Heart left ventricle (tissue), 16 donors: ENCODE measurements at regions of chr7 and their contacts with region 1.

Region 1: GRCh38 chr7:112665726-112666125 is 124.5 kb downstream of the TMEM168 start:
- DNase-seq: no peak
- ATAC-seq: peak in 3 of 4 donors; percentile 52 to 73 (median 59)
- H3K4me3 ChIP-seq: no peak overlapping the region
- H3K27ac ChIP-seq: no peak overlapping the region
- H3K4me1 ChIP-seq: no peaks in the 10 kb centered on the region
- H3K27me3 ChIP-seq: no peaks in the 10 kb centered on the region
- CTCF ChIP-seq: peak in 10 of 12 donors; percentile 5 to 44 (median 36)
- POLR2A ChIP-seq: no peak

Region 2: GRCh38 chr7:112723416-112723815 is 57.7 kb after region 1 on chr7:
- intact Hi-C with region 1: loop called in 1 of 10 experiments (anchors 10 kb)
- DNase-seq: no peak
- ATAC-seq: no peak
- H3K4me3 ChIP-seq: no peak overlapping the region
- H3K27ac ChIP-seq: no peak overlapping the region
- H3K4me1 ChIP-seq: peaks cover 0 to 12% (median 0%) of the 10 kb centered on the region in 12 donors
- H3K27me3 ChIP-seq: no peaks in the 10 kb centered on the region
- CTCF ChIP-seq: no peak
- POLR2A ChIP-seq: no peak